Activated CD8-positive, alpha-beta memory T cell treated with anti-CD3 and anti-CD28 coated beads, Interleukin-2, amount 10 ng/mL, durations not matched to agents 7 days and 5 days (primary cell): ENCODE measurements at regions of chr5 and their contacts with region 1.

Region 1: DNA sequence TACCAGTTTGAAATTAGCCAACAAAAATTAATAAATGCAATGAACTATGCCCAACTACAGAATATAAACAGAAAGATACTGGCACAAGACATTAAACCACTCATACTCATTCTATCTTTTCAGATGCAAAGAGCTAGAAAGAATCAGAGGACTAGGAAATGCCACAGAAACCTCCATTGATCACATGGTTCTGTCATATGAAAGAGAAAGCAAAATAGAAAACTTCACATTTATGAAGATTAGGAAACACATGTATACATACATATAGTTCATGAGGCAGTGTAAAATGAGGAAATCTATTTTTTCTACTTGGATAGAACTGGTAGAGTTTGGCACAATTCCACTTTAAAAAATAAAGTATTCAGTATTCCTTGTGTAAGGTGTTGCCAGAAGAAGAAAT is 275.1 kb upstream of the PTGER4 start:
- DNase-seq: no peak
- ATAC-seq: peak; percentile 67
- H3K4me3 Mint-ChIP-seq: peak overlapping the region; percentile 42
- H3K27ac Mint-ChIP-seq: peak overlapping the region; percentile 96
- H3K4me1 Mint-ChIP-seq: peaks cover 76% of the 10 kb centered on the region
- H3K27me3 Mint-ChIP-seq: no peaks in the 10 kb centered on the region

Region 2: GRCh38 chr5:40390281-40391149 is 14.1 kb before region 1 on chr5:
- CTCF ChIA-PET with region 1: interaction called, 14 read pairs
- DNase-seq: no peak
- ATAC-seq: no peak
- H3K4me3 Mint-ChIP-seq: no peak overlapping the region
- H3K27ac Mint-ChIP-seq: no peak overlapping the region
- H3K4me1 Mint-ChIP-seq: peaks cover 45% of the 10 kb centered on the region
- H3K27me3 Mint-ChIP-seq: no peaks in the 10 kb centered on the region

Region 3: DNA sequence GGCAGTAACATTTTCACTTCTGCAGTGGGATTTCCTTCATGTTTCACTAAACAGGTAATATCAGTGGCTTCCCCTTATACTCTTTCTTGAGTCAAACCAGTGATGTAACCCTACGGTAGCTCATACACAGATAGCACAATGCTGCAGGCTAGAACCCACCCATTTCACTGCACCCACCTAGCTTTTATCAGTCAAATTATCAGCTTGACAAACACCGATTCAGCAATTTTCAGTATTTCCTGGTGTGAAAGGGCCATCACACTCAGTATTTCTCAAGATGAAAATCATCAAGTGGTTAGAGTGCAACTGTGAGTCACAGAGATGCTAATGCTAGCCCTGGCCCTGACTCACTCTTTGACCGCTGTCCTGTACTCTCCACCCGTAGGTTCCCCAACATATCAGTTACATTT is 32.8 kb after region 1 on chr5:
- CTCF ChIA-PET with region 1: interaction called, 25 read pairs
- DNase-seq: peak; percentile 74
- ATAC-seq: peak; percentile 77
- H3K4me3 Mint-ChIP-seq: peak overlapping the region; percentile 31
- H3K27ac Mint-ChIP-seq: peak overlapping the region; percentile 98
- H3K4me1 Mint-ChIP-seq: peaks cover 80% of the 10 kb centered on the region
- H3K27me3 Mint-ChIP-seq: no peaks in the 10 kb centered on the region